ENCODE measurements at regions of chr5 and their contacts with region 1.

Region 1: DNA sequence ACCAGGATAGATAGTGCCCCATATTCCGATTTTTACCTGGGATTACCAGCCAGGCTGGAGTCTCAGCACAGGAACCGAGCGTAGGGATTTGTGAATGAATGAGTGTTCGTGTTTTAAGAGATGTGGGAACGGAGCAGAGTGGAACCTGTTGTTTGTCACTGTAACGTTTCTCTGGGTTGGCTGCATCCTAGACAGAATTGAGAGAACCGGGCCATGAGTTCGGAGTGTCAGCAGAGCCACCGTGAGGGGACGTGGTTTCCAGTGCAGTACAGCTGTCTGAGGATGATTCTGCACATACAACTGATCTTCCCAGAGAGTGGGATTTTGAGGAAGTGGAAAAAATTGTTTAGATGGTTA is 1.2 kb downstream of the PDE8B start:
- DNase-seq: no peak
- ATAC-seq: no peak
- H3K4me3 ChIP-seq: peak overlapping the region in 1 of 5 experiments; percentile 26
- H3K4me3 Mint-ChIP-seq: peak overlapping the region; percentile 80
- H3K27ac ChIP-seq: no peak overlapping the region
- H3K27ac Mint-ChIP-seq: no peak overlapping the region
- H3K4me1 ChIP-seq: peaks cover 8 to 9% of the 10 kb centered on the region in 2 donors
- H3K4me1 Mint-ChIP-seq: peaks cover 18% of the 10 kb centered on the region
- H3K27me3 ChIP-seq: peaks cover 0 to 32% (median 24%) of the 10 kb centered on the region in 4 experiments
- H3K27me3 Mint-ChIP-seq: peaks cover 59% of the 10 kb centered on the region
- CTCF ChIP-seq: no peak

Region 2: GRCh38 chr5:76888733-76889300 is 322.9 kb before region 1 on chr5:
- CTCF ChIA-PET with region 1: no interaction called
- POLR2A ChIA-PET with region 1: interaction called, 11 read pairs
- intact Hi-C with region 1: no loop called
- DNase-seq: no peak
- ATAC-seq: no peak
- H3K4me3 ChIP-seq: no peak overlapping the region
- H3K4me3 Mint-ChIP-seq: no peak overlapping the region
- H3K27ac ChIP-seq: no peak overlapping the region
- H3K27ac Mint-ChIP-seq: no peak overlapping the region
- H3K4me1 ChIP-seq: no peaks in the 10 kb centered on the region
- H3K4me1 Mint-ChIP-seq: no peaks in the 10 kb centered on the region
- H3K27me3 ChIP-seq: no peaks in the 10 kb centered on the region
- H3K27me3 Mint-ChIP-seq: peaks cover 6% of the 10 kb centered on the region
- CTCF ChIP-seq: no peak

Measured in B cell (primary cell).